Activated CD4-positive, alpha-beta T cell treated with anti-CD3 and anti-CD28 coated beads for 36 hours (primary cell): ENCODE measurements at regions of chr22 and their contacts with region 1.

Region 1: GRCh38 chr22:38578505-38578904 is 8.5 kb upstream of the DMC1 start:
- DNase-seq: no peak
- ATAC-seq: no peak
- H3K4me3 Mint-ChIP-seq: no peak overlapping the region
- H3K27ac Mint-ChIP-seq: no peak overlapping the region
- H3K4me1 Mint-ChIP-seq: no peaks in the 10 kb centered on the region
- H3K27me3 Mint-ChIP-seq: no peaks in the 10 kb centered on the region

Region 2: GRCh38 chr22:38481162-38481870 is 97.2 kb before region 1 on chr22:
- CTCF ChIA-PET with region 1: interaction called, 3 read pairs
- POLR2A ChIA-PET with region 1: interaction called, 13 read pairs
- intact Hi-C with region 1: no loop called
- DNase-seq: no peak
- ATAC-seq: no peak
- H3K4me3 Mint-ChIP-seq: no peak overlapping the region
- H3K27ac Mint-ChIP-seq: peak overlapping the region; percentile 17
- H3K4me1 Mint-ChIP-seq: peaks cover 25% of the 10 kb centered on the region
- H3K27me3 Mint-ChIP-seq: no peaks in the 10 kb centered on the region

Region 3: GRCh38 chr22:38788021-38788816 is 209.7 kb after region 1 on chr22:
- CTCF ChIA-PET with region 1: no interaction called
- POLR2A ChIA-PET with region 1: no interaction called
- intact Hi-C with region 1: no loop called
- DNase-seq: no peak
- ATAC-seq: no peak
- H3K4me3 Mint-ChIP-seq: no peak overlapping the region
- H3K27ac Mint-ChIP-seq: no peak overlapping the region
- H3K4me1 Mint-ChIP-seq: peaks cover 6% of the 10 kb centered on the region
- H3K27me3 Mint-ChIP-seq: no peaks in the 10 kb centered on the region

Region 4: GRCh38 chr22:38862375-38863329 is 284.1 kb after region 1 on chr22:
- CTCF ChIA-PET with region 1: no interaction called
- POLR2A ChIA-PET with region 1: no interaction called
- intact Hi-C with region 1: no loop called
- DNase-seq: no peak
- ATAC-seq: no peak
- H3K4me3 Mint-ChIP-seq: no peak overlapping the region
- H3K27ac Mint-ChIP-seq: no peak overlapping the region
- H3K4me1 Mint-ChIP-seq: no peaks in the 10 kb centered on the region
- H3K27me3 Mint-ChIP-seq: no peaks in the 10 kb centered on the region